Upper lobe of right lung (tissue), 1 donor: ENCODE measurements at regions of chr1 and their contacts with region 1.

Region 1: GRCh38 chr1:208245185-208245705 is 1.1 kb upstream of the PLXNA2 start:
- DNase-seq: peak; percentile 88
- ATAC-seq: peak; percentile 85
- H3K4me3 ChIP-seq: peak overlapping the region; percentile 92
- H3K27ac ChIP-seq: peak overlapping the region; percentile 88
- H3K4me1 ChIP-seq: peaks cover 19% of the 10 kb centered on the region
- H3K27me3 ChIP-seq: no peaks in the 10 kb centered on the region
- CTCF ChIP-seq: peak; percentile 89

Region 2: GRCh38 chr1:208029381-208030287 is 215.6 kb before region 1 on chr1:
- intact Hi-C with region 1: loop called (anchors 10 kb)
- DNase-seq: no peak
- ATAC-seq: peak; percentile 5
- H3K4me3 ChIP-seq: no peak overlapping the region
- H3K27ac ChIP-seq: peak overlapping the region; percentile 81
- H3K4me1 ChIP-seq: peaks cover 11% of the 10 kb centered on the region
- H3K27me3 ChIP-seq: no peaks in the 10 kb centered on the region
- CTCF ChIP-seq: no peak

Region 3: DNA sequence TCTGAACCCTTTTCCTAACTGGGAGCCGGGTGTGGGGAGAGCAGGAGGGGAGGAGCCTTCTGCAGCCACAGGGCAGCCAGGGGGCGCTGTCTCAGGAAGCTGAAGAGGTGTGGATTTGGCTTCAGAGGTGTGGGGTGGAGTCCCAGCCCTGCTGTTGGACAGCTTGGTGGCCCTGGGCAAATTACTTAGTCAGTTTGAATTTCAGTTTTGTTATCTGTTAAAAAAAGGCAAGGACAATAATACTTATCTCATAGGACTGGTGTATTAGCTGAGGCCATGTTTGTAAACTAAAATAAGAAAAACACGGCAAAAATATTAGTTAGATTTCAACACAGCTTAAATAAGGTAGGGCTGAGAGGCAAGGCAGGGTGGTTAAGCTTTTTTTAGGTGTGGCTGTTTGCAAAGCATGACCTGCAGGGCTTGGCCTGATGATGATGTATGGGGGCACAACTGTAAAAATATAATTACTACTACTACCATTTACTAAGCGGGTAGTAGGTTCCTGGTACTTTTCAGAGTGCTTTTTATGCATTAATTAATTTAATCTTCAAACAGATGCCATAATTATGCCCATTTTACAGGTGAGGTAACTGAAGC is 112.9 kb before region 1 on chr1:
- intact Hi-C with region 1: loop called (anchors 10 kb)
- DNase-seq: peak; percentile 92
- ATAC-seq: peak; percentile 96
- H3K4me3 ChIP-seq: no peak overlapping the region
- H3K27ac ChIP-seq: no peak overlapping the region
- H3K4me1 ChIP-seq: no peaks in the 10 kb centered on the region
- H3K27me3 ChIP-seq: no peaks in the 10 kb centered on the region
- CTCF ChIP-seq: peak; percentile 86